Uterus (tissue), 4 donors: ENCODE measurements at regions of chr12 and their contacts with region 1.

Region 1: GRCh38 chr12:6752921-6753771 is at the start of gene MLF2:
- DNase-seq: peak; percentile 99
- H3K4me3 ChIP-seq: peak within 1 kb of the TSS; percentile 82 to 84
- H3K27ac ChIP-seq: peak within 1 kb of the TSS; percentile 97 to 100
- H3K4me1 ChIP-seq: peaks cover 4 to 7% of the 10 kb centered on the region in 2 donors
- H3K27me3 ChIP-seq: no peaks in the 10 kb centered on the region
- CTCF ChIP-seq: peak in 3 of 4 experiments; percentile 34 to 95 (median 91)
- POLR2A ChIP-seq: peak; percentile 98 to 99
- total RNA-seq, gene MLF2: 124 to 408 (median 147) TPM

Region 2: GRCh38 chr12:6825398-6826124 is 72.4 kb after region 1 on chr12:
- intact Hi-C with region 1: loop called (anchors 10 kb)
- DNase-seq: peak; percentile 88 to 89
- H3K4me3 ChIP-seq: peak overlapping the region; percentile 13 to 18
- H3K27ac ChIP-seq: peak overlapping the region; percentile 90 to 97
- H3K4me1 ChIP-seq: peaks cover 5 to 6% of the 10 kb centered on the region in 2 donors
- H3K27me3 ChIP-seq: peaks cover 0 to 4% of the 10 kb centered on the region in 2 donors
- CTCF ChIP-seq: peak; percentile 85 to 93 (median 90)
- POLR2A ChIP-seq: peak in 1 of 2 donors; percentile 29